Endothelial cell of umbilical vein (primary cell): ENCODE measurements at regions of chr10 and their contacts with region 1.

Region 1: GRCh38 chr10:99612167-99612831 is 7.9 kb downstream of the SLC25A28 start:
- DNase-seq: peak; percentile 71
- H3K4me3 ChIP-seq: no peak overlapping the region
- H3K27ac ChIP-seq: no peak overlapping the region
- H3K4me1 ChIP-seq: peaks cover 2% of the 10 kb centered on the region
- H3K27me3 ChIP-seq: no peaks in the 10 kb centered on the region
- CTCF ChIP-seq: peak; percentile 66 to 67
- POLR2A ChIP-seq: no peak

Region 2: DNA sequence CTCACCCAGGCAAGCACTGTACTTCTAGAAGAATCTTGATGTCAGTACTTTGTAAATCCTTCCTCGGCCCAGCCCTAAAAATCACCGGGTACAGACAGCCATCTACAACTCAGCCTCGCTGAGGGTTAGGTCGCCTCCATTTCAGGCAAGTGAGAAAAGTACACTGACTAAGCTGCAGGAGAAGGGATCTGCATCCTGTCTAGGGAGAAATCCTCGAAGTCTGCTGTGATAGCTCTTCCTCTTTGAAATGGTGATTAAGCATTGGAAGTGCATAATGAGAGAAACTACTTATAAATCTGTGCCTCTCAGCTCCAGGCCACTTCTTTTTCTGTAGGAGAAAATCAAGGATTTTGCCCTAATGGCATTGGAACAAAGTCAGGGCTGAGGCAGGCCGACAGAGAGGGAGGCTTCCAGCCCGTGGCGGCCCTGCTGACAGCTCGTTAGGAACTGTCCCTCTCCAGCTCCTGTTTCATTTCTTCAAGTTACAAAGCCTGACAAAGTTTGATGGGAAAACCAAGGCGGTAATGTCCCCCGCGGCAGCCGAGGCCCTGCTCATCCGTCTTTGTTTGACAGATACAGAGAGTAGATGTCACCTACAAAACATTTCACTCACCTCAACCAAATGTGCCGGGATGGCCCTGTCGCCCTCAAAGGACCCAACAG is 167.8 kb before region 1 on chr10:
- CTCF ChIA-PET with region 1: interaction called, 10 read pairs
- POLR2A ChIA-PET with region 1: no interaction called
- dilution Hi-C with region 1: loop called (anchors 25 kb)
- intact Hi-C with region 1: no loop called
- DNase-seq: no peak
- H3K4me3 ChIP-seq: no peak overlapping the region
- H3K27ac ChIP-seq: no peak overlapping the region
- H3K4me1 ChIP-seq: no peaks in the 10 kb centered on the region
- H3K27me3 ChIP-seq: peaks cover 10 to 23% of the 10 kb centered on the region in 2 experiments
- CTCF ChIP-seq: no peak
- POLR2A ChIP-seq: no peak

Region 3: GRCh38 chr10:99595770-99596465 is 16.4 kb before region 1 on chr10:
- CTCF ChIA-PET with region 1: interaction called, 13 read pairs
- POLR2A ChIA-PET with region 1: interaction called, 4 read pairs
- dilution Hi-C with region 1: no loop called
- intact Hi-C with region 1: no loop called
- DNase-seq: no peak
- H3K4me3 ChIP-seq: no peak overlapping the region
- H3K27ac ChIP-seq: no peak overlapping the region
- H3K4me1 ChIP-seq: no peaks in the 10 kb centered on the region
- H3K27me3 ChIP-seq: peaks cover 2 to 9% of the 10 kb centered on the region in 2 experiments
- CTCF ChIP-seq: no peak
- POLR2A ChIP-seq: no peak

Region 4: DNA sequence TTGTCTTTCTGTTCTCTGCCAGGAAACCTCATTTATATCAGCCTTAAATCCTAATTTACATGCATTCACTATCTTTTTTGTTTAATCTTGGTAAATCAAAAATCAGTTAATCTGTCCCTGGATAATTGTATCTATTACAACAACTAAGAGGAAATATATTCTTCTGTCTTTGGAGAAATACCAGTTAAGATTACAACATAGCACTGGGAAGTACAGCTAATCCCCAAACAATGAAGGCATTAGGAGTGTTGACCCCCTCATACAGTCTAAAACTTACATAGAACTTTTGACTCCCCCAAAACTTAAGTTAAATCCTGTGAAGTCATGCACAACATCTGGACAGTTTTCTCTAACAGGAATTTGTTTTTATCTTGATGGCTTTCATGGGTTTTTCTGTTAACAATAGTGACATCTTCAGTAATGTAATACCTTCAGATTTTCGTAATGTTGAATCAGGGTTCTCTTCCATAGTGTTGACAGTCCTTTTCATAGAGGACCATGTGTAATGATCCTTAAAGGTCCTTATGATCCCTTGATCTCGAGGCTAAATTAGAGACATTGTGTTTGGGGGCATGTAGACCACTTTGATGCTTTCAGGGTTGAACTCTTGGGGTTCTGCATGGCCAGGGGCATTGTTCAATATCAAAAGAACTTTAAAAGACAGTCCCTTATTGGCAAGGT is 146.1 kb after region 1 on chr10:
- CTCF ChIA-PET with region 1: no interaction called
- POLR2A ChIA-PET with region 1: no interaction called
- dilution Hi-C with region 1: no loop called
- intact Hi-C with region 1: no loop called
- DNase-seq: no peak
- H3K4me3 ChIP-seq: no peak overlapping the region
- H3K27ac ChIP-seq: no peak overlapping the region
- H3K4me1 ChIP-seq: no peaks in the 10 kb centered on the region
- H3K27me3 ChIP-seq: no peaks in the 10 kb centered on the region
- CTCF ChIP-seq: no peak
- POLR2A ChIP-seq: no peak

Region 5: DNA sequence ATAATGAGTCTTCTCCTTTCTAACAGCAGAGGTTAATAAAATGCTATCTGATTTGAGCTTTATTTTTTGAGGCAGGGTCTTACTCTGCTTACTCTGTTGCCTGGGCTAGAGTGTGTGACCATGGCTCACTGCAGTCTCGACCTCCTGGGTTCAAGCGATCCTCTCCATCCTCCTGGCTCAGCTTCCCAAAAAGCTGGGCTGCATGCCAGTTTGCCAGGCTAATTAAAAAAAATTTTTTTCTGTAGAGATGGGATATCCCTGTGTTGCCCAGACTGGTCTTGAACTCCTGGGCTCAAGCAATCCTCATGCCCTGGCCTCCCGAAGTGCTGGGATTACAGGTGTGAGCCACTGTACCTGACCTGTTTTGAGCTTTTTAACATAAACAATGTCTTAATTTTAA is 791.4 kb after region 1 on chr10:
- CTCF ChIA-PET with region 1: no interaction called
- POLR2A ChIA-PET with region 1: no interaction called
- dilution Hi-C with region 1: no loop called
- intact Hi-C with region 1: no loop called
- DNase-seq: no peak
- H3K4me3 ChIP-seq: no peak overlapping the region
- H3K27ac ChIP-seq: no peak overlapping the region
- H3K4me1 ChIP-seq: no peaks in the 10 kb centered on the region
- H3K27me3 ChIP-seq: no peaks in the 10 kb centered on the region
- CTCF ChIP-seq: no peak
- POLR2A ChIP-seq: no peak